ENCODE measurements at regions of chr2 and their contacts with region 1.

Region 1: DNA sequence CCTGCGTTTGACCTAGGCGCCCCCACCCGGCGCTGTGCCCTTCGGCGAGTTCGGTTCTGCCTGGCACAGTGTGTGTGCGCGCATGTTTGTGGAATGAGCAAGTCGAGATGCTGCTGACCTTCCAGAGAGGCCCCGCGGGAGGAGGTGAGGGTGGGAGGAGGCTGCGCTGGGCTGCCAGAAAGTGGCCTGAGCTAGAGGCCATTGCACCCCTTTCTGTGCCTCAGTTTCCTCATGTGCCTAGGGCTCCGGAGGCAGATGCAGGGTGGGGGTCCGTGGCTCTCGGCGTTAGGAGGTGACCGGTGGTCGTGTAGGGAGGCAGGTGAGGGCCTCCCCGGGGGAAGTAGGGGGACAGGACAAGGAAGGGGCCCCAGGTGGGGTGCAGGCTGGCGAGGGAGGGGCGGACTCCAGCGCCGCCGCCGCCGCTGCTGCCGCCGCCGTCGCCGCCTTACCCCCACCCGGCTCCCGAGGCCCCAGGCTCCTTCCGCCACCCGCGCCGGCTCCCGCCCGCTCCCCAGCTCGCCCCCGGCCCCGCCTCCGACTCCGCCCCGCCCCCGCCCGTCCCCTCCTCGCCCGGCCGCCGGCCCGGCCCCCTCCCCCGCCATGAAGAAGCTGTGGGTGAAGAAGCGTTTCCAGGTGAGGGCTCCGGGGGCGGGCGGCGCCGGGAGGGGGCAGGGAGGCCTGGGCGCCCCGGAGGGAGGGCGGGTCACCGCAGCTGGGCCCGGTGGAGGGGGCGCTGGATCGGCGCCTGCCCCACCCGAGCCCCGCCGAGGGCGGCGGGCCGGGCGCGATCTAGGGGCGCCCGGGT is 7.0 kb downstream of the SPEG start:
- DNase-seq: peak in 1 of 2 donors; percentile 88
- H3K4me3 ChIP-seq: peak overlapping the region; percentile 77 to 85
- H3K27ac ChIP-seq: peak overlapping the region; percentile 96 to 97
- H3K4me1 ChIP-seq: peaks cover 0 to 86% (median 51%) of the 10 kb centered on the region in 4 donors
- H3K27me3 ChIP-seq: no peaks in the 10 kb centered on the region
- CTCF ChIP-seq: no peak

Region 2: GRCh38 chr2:219402665-219403515 is 38.8 kb before region 1 on chr2:
- intact Hi-C with region 1: loop called (anchors 5 kb)
- DNase-seq: peak; percentile 74 to 79
- H3K4me3 ChIP-seq: no peak overlapping the region
- H3K27ac ChIP-seq: peak overlapping the region; percentile 90 to 94
- H3K4me1 ChIP-seq: peaks cover 5 to 53% (median 44%) of the 10 kb centered on the region in 4 donors
- H3K27me3 ChIP-seq: no peaks in the 10 kb centered on the region
- CTCF ChIP-seq: peak; percentile 93 to 94

Measured in tibial artery (tissue), 4 donors.